T-cell (primary cell): ENCODE measurements at regions of chr22 and their contacts with region 1.

Region 1: GRCh38 chr22:24848559-24849168 is 42.7 kb downstream of the SGSM1 start:
- DNase-seq: no peak
- ATAC-seq: no peak
- H3K4me3 ChIP-seq: no peak overlapping the region
- H3K4me3 Mint-ChIP-seq: no peak overlapping the region
- H3K27ac ChIP-seq: no peak overlapping the region
- H3K27ac Mint-ChIP-seq: no peak overlapping the region
- H3K4me1 ChIP-seq: peaks cover 0 to 19% of the 10 kb centered on the region in 2 experiments
- H3K4me1 Mint-ChIP-seq: peaks cover 0 to 20% (median 9%) of the 10 kb centered on the region in 3 donors
- H3K27me3 ChIP-seq: peaks cover 0 to 4% of the 10 kb centered on the region in 2 experiments
- H3K27me3 Mint-ChIP-seq: no peaks in the 10 kb centered on the region

Region 2: DNA sequence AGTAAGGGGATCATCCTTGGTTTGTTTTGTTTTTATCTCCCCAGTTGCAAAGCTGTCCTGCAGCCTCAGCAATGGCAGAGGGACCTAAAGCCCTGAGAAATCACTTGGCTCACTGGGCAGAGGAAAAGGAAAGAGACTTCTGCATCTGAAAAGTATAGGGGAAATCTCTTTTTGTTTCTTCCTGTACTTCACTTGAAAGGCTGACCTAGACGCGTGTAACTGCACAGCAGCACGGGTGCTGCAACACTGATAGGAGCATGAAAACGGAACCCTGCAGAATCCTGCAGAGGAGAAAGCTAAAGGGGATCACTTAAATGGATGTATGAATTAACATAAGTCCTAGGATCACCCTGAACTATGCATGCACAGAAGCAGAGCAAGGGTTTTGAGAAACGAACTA is 72.1 kb before region 1 on chr22:
- CTCF ChIA-PET with region 1: no interaction called
- POLR2A ChIA-PET with region 1: no interaction called
- DNase-seq: no peak
- ATAC-seq: no peak
- H3K4me3 ChIP-seq: no peak overlapping the region
- H3K4me3 Mint-ChIP-seq: no peak overlapping the region
- H3K27ac ChIP-seq: no peak overlapping the region
- H3K27ac Mint-ChIP-seq: no peak overlapping the region
- H3K4me1 ChIP-seq: no peaks in the 10 kb centered on the region
- H3K4me1 Mint-ChIP-seq: peaks cover 0 to 6% (median 2%) of the 10 kb centered on the region in 3 donors
- H3K27me3 ChIP-seq: peaks cover 0 to 16% of the 10 kb centered on the region in 2 experiments
- H3K27me3 Mint-ChIP-seq: peaks cover 9 to 23% of the 10 kb centered on the region in 2 donors

Region 3: DNA sequence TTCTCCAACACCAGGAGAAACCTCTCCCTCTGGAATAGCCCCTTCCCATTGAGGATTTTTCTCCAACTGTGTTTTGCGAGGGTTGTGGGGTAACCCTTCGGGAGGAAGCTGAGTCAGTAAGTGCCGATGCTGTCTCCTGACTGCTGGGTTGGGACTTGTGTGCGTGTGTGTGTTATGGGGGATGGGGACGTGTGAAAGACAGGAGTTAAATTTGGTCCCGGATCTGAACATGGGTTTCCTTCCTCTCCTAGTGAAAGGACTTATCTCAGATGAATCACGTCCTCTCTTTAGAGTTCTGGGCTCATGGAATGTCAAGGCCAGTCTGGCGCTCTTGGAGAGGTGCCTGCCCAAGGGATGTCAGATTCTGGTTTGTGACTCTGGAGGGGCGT is 137.2 kb after region 1 on chr22:
- CTCF ChIA-PET with region 1: no interaction called
- POLR2A ChIA-PET with region 1: no interaction called
- DNase-seq: no peak
- ATAC-seq: no peak
- H3K4me3 ChIP-seq: no peak overlapping the region
- H3K4me3 Mint-ChIP-seq: no peak overlapping the region
- H3K27ac ChIP-seq: no peak overlapping the region
- H3K27ac Mint-ChIP-seq: peak overlapping the region in 1 of 2 donors; percentile 52
- H3K4me1 ChIP-seq: peaks cover 0 to 19% of the 10 kb centered on the region in 2 experiments
- H3K4me1 Mint-ChIP-seq: peaks cover 8 to 17% (median 8%) of the 10 kb centered on the region in 3 donors
- H3K27me3 ChIP-seq: peaks cover 0 to 20% of the 10 kb centered on the region in 2 experiments
- H3K27me3 Mint-ChIP-seq: peaks cover 9 to 22% of the 10 kb centered on the region in 2 donors

Region 4: DNA sequence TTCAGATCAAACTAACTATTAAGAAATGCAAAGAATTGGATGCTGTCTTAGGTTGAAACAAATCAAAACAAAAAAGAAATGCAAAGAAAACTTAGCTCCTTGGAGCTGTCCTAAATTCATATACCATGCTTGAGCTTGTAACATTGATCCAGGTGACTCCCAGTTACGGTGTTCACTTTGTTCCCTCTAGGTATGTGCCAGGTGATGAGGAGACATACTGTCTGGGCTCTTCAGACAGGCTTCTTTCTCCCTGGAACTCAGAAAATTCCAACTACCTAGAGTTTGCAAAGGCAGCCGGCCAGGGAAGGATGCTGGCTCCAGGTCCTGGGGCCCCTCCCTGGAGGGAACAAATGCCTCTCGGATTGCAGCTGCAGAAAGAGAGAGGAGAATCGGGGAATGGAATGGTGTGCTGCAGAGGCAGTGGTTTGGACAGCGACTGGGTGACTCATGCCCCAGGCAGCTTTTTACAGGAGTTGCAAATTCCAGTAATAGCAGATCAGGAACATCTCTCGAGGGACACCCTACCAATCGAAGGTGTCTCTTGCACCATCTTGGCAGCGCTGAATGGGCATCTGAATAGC is 1568.1 kb after region 1 on chr22:
- CTCF ChIA-PET with region 1: interaction called in 1 of 2 experiments, 12 read pairs
- POLR2A ChIA-PET with region 1: no interaction called
- DNase-seq: no peak
- ATAC-seq: no peak
- H3K4me3 ChIP-seq: no peak overlapping the region
- H3K4me3 Mint-ChIP-seq: no peak overlapping the region
- H3K27ac ChIP-seq: no peak overlapping the region
- H3K27ac Mint-ChIP-seq: no peak overlapping the region
- H3K4me1 ChIP-seq: no peaks in the 10 kb centered on the region
- H3K4me1 Mint-ChIP-seq: no peaks in the 10 kb centered on the region
- H3K27me3 ChIP-seq: peaks cover 2 to 9% of the 10 kb centered on the region in 2 experiments
- H3K27me3 Mint-ChIP-seq: peaks cover 3 to 10% of the 10 kb centered on the region in 2 donors